ENCODE measurements at regions of chr1 and their contacts with region 1.

Region 1: GRCh38 chr1:61588736-61589672 is 135.9 kb downstream of the TM2D1 start:
- DNase-seq: peak; percentile 78
- H3K4me3 ChIP-seq: peak overlapping the region in 1 of 2 experiments; percentile 10; a peak in 1 of 4 replicates
- H3K27ac ChIP-seq: no peak overlapping the region
- H3K4me1 ChIP-seq: peaks cover 0 to 8% of the 10 kb centered on the region in 2 experiments; a peak in 2 of 4 replicates
- H3K27me3 ChIP-seq: no peaks in the 10 kb centered on the region
- CTCF ChIP-seq: peak; percentile 88
- EP300 ChIP-seq: no peak
- RAD21 ChIP-seq: peak; percentile 86

Region 2: GRCh38 chr1:61569303-61569621 is 19.7 kb before region 1 on chr1:
- CTCF ChIA-PET with region 1: interaction called, 17 read pairs
- POLR2A ChIA-PET with region 1: no interaction called
- DNase-seq: peak; percentile 52
- H3K4me3 ChIP-seq: no peak overlapping the region; a peak in 1 of 4 replicates
- H3K27ac ChIP-seq: peak overlapping the region in 1 of 2 experiments; percentile 90; a peak in 2 of 4 replicates
- H3K4me1 ChIP-seq: peaks cover 0 to 7% of the 10 kb centered on the region in 2 experiments; a peak in 2 of 4 replicates
- H3K27me3 ChIP-seq: no peaks in the 10 kb centered on the region
- CTCF ChIP-seq: no peak
- EP300 ChIP-seq: no peak
- RAD21 ChIP-seq: no peak

Region 3: DNA sequence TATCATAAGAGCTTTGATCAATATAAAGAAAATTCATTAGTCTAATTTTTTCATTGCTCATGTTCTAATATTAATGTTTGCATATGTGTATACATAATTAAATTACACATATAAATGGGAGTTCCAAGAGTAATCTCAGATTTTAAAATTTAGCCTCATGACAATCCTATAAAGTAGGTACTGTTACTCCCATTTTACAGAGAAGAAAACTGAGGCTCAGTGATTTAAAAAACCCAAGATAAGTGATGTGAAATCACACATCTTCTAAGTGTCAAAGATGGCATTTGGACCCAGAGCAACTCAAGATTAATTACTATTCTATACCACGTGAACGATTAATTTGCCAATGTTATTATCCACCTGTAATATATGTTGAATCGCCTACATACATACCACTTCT is 13.7 kb after region 1 on chr1:
- CTCF ChIA-PET with region 1: interaction called, 15 read pairs
- POLR2A ChIA-PET with region 1: no interaction called
- DNase-seq: no peak
- H3K4me3 ChIP-seq: no peak overlapping the region
- H3K27ac ChIP-seq: no peak overlapping the region
- H3K4me1 ChIP-seq: peaks cover 3 to 4% of the 10 kb centered on the region in 2 experiments; a peak in 2 of 4 replicates
- H3K27me3 ChIP-seq: no peaks in the 10 kb centered on the region
- CTCF ChIP-seq: no peak
- EP300 ChIP-seq: no peak
- RAD21 ChIP-seq: no peak

Region 4: DNA sequence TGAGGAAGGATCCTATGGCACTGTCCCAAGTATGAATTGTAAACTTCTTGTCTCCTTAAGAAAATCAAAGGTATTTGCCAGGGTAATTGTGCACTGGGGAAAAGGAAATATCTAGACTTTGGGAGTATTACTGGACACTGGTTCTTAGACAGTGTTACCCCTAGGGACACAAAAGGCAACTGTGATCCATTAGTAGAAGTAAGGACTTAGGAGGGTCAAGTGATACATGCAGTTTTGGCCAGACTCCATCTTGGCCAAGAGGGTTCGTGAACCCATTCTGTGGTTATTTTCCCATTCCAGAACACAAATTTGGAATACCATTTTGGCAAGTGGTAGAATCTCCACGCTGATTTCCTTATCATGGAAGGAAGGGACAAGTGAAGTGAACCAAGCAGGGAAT is 37.8 kb after region 1 on chr1:
- CTCF ChIA-PET with region 1: no interaction called
- POLR2A ChIA-PET with region 1: no interaction called
- DNase-seq: no peak
- H3K4me3 ChIP-seq: no peak overlapping the region
- H3K27ac ChIP-seq: no peak overlapping the region
- H3K4me1 ChIP-seq: no peaks in the 10 kb centered on the region
- H3K27me3 ChIP-seq: no peaks in the 10 kb centered on the region
- CTCF ChIP-seq: no peak
- EP300 ChIP-seq: no peak
- RAD21 ChIP-seq: no peak

Measured in SK-N-SH (cell line).